ENCODE measurements at regions of chr14 and their contacts with region 1.

Region 1: DNA sequence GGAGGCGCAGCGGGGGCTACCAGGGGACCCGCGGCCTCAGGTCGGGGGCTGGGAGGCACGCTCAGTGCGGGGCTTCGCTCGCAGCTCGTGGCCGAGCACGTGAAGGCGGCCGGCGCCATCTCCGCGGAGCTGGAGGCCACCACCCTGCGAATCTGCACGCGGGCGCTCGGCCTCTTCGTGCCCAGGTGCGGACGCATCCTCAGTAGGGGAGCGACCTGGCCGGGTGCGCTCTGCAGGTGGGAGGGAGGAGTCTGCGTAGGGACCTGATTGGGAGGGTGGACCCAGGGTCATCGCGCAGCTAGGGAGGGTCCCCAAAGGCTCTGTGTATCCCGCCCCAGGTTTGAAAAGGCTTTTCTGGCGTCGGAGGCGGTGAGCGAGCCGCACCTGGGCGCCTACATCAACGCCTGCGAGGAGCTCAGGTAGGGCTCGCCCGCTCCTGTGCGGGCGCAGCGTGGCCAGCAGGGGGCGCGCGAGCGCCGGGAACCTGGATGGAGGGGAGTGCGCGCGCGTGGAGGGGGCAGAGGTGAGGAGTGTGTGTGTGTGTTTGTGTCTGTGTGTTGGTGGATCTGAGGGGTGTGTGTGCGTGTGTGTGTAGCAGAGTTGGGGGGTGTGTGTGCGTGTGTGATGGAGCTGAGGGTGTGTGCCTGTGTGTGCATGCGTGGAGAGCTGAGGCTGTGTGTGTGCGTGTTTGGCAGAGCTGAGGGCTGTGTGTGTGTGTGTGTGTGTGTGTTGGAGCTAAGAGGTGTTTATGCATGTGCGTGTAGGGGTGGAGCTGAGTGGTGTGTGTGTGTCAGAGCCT is 10.3 kb downstream of the EXOC3L4 start:
- DNase-seq: peak; percentile 84
- CTCF ChIP-seq: peak; percentile 99

Region 2: GRCh38 chr14:103078093-103078749 is 26.6 kb before region 1 on chr14:
- CTCF ChIA-PET with region 1: interaction called, 18 read pairs
- POLR2A ChIA-PET with region 1: no interaction called
- DNase-seq: peak; percentile 85
- CTCF ChIP-seq: peak; percentile 87

Region 3: GRCh38 chr14:103091041-103091882 is 13.6 kb before region 1 on chr14:
- CTCF ChIA-PET with region 1: interaction called, 70 read pairs
- POLR2A ChIA-PET with region 1: no interaction called
- DNase-seq: peak; percentile 92
- CTCF ChIP-seq: peak; percentile 73

Region 4: GRCh38 chr14:103130965-103131364 is 26.1 kb after region 1 on chr14:
- CTCF ChIA-PET with region 1: interaction called, 41 read pairs
- POLR2A ChIA-PET with region 1: no interaction called
- DNase-seq: no peak
- CTCF ChIP-seq: no peak

Region 5: GRCh38 chr14:103155013-103155412 is 50.2 kb after region 1 on chr14:
- CTCF ChIA-PET with region 1: interaction called, 13 read pairs
- POLR2A ChIA-PET with region 1: no interaction called
- DNase-seq: peak; percentile 21
- CTCF ChIP-seq: no peak

Region 6: GRCh38 chr14:103185051-103185992 is 80.5 kb after region 1 on chr14:
- CTCF ChIA-PET with region 1: interaction called, 43 read pairs
- POLR2A ChIA-PET with region 1: no interaction called
- DNase-seq: peak; percentile 42
- CTCF ChIP-seq: peak; percentile 30

Region 7: DNA sequence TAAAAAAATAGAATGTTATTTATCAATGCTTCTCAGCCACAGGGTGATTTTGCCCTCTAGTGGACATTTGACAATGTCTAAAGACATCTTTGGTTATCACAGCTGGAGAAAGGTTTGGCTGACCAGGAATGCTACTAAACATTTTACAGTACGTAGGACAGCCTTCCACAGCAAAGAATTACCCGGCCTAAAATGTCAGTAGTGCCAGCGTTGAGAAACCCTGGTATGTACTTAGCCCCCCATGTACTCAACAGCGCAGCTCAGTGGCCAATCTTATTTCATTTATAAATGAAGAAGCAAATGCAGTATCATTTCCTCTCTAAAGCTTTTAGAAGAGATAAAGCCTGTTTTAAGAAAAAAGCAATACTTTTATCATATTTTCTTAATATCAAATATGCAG is 286.2 kb after region 1 on chr14:
- CTCF ChIA-PET with region 1: interaction called, 21 read pairs
- POLR2A ChIA-PET with region 1: no interaction called
- DNase-seq: peak; percentile 48
- CTCF ChIP-seq: peak; percentile 52

Measured in GM10248 (cell line).